ENCODE measurements at regions of chr11 and their contacts with region 1.

Region 1: DNA sequence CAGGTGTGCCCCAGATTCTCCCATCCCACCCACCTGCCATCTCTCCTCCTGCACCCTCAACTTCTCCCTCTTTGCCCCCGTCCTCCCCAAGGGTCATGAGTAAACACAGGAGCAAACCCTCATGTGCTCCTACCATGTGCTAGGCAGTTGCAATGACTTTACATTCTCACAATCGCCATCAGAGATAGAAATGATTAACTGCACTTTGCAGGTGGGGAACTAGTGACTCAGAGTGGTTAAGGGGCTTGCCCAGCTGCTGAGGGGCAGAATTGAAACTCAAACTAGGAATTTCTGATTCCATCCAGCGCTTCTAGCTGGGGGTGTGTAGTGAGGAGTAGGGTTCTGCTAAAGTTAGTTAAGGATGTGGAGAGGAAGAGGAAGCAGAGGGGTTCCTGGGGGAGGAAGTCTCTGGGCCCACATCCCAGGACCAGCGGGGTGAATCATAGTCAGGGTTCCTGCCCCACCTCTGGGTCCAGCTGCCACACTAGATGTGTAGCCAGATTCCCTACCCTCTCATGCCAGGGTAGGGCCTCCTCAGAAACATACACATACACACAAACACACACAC is 16.0 kb upstream of the PRG2 start:
- DNase-seq: peak; percentile 60
- CTCF ChIP-seq: no peak

Region 2: GRCh38 chr11:57368106-57368844 is 38.1 kb before region 1 on chr11:
- CTCF ChIA-PET with region 1: no interaction called
- POLR2A ChIA-PET with region 1: no interaction called
- DNase-seq: no peak
- CTCF ChIP-seq: no peak

Region 3: DNA sequence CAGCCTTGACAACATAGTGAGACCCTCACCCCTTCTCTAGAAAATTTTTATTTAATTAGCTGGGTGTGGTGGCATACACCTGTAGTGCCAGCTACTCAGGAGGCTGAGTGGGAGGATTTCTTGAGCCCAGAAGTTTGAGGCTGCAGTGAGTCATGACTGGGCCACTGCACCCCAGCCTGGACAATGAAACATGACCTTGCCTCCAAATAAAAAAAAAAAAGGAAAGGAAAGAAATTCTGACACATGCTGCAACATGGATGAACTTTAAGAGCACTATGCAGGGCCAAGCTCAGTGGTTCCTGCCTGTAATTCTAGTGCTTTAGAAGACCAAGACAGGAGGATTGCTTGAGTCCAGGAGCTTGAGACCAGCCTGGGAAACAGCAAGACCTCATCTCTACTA is 11.7 kb after region 1 on chr11:
- CTCF ChIA-PET with region 1: interaction called, 13 read pairs
- POLR2A ChIA-PET with region 1: interaction called, 11 read pairs
- DNase-seq: no peak
- CTCF ChIP-seq: no peak

Region 4: GRCh38 chr11:57426929-57427726 is 20.7 kb after region 1 on chr11 and contains the start of gene SLC43A3:
- CTCF ChIA-PET with region 1: interaction called, 4 read pairs
- POLR2A ChIA-PET with region 1: interaction called, 11 read pairs
- DNase-seq: peak; percentile 85
- CTCF ChIP-seq: no peak

Measured in GM10248 (cell line).